ENCODE measurements at regions of chr11 and their contacts with region 1.

Region 1: DNA sequence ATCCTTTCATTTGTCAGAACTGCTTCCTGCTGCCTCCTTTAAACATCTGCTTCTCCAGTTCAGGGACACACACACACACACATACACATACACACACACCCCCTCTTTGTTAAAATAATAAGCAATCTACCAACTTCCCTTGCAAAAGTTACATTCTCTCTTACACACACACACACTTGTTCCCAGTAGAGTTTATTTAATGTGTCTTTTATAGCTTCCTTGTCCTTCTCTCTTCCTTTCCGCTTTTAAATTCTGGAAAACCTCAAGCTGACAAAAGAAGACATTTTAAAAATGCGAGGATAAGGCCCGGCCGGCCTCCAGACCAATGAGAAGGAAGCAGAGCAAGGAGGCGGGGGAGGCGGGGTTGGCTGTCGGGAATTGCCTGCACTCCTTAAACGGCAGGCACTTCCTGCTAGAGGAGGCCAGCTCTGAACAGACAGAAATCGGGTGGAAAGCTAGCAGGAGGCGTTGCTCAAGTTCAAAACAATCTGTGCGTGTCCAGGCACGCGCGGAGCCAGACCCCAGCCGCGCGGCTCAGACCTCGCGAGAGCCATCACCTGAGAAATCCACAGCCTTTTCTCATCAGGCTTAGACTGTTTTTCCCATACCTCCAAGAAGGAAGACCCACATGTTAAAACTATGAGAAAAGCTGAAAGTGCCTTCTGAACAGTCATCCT is 99.9 kb downstream of the MAML2 start:
- DNase-seq: peak; percentile 37
- ATAC-seq: peak; percentile 67
- H3K4me3 ChIP-seq: no peak overlapping the region; a peak in 1 of 6 replicates
- H3K27ac ChIP-seq: peak overlapping the region; percentile 71
- H3K4me1 ChIP-seq: peaks cover 77% of the 10 kb centered on the region
- H3K27me3 ChIP-seq: no peaks in the 10 kb centered on the region
- CTCF ChIP-seq: no peak
- EP300 ChIP-seq: no peak
- POLR2A ChIP-seq: no peak
- RAD21 ChIP-seq: no peak

Region 2: GRCh38 chr11:96091476-96091875 is 151.6 kb before region 1 on chr11:
- CTCF ChIA-PET with region 1: no interaction called
- POLR2A ChIA-PET with region 1: no interaction called
- in situ Hi-C with region 1: no loop called
- intact Hi-C with region 1: loop called (anchors 10 kb)
- DNase-seq: peak; percentile 18
- ATAC-seq: peak; percentile 53
- H3K4me3 ChIP-seq: no peak overlapping the region
- H3K27ac ChIP-seq: peak overlapping the region; percentile 47
- H3K4me1 ChIP-seq: peaks cover 43% of the 10 kb centered on the region
- H3K27me3 ChIP-seq: no peaks in the 10 kb centered on the region
- CTCF ChIP-seq: peak; percentile 14; the same call in 1 of the 2 replicates
- EP300 ChIP-seq: no peak
- POLR2A ChIP-seq: no peak
- RAD21 ChIP-seq: no peak

Region 3: GRCh38 chr11:96149743-96150555 is 93.2 kb before region 1 on chr11:
- CTCF ChIA-PET with region 1: no interaction called
- POLR2A ChIA-PET with region 1: no interaction called
- in situ Hi-C with region 1: no loop called
- intact Hi-C with region 1: loop called (anchors 1 kb)
- DNase-seq: peak; percentile 48
- ATAC-seq: no peak; the same call in 2 of the 3 replicates
- H3K4me3 ChIP-seq: no peak overlapping the region
- H3K27ac ChIP-seq: no peak overlapping the region
- H3K4me1 ChIP-seq: peaks cover 63% of the 10 kb centered on the region
- H3K27me3 ChIP-seq: no peaks in the 10 kb centered on the region
- CTCF ChIP-seq: no peak
- EP300 ChIP-seq: no peak
- POLR2A ChIP-seq: no peak
- RAD21 ChIP-seq: no peak

Region 4: GRCh38 chr11:96254087-96254486 is 11.0 kb after region 1 on chr11:
- CTCF ChIA-PET with region 1: no interaction called
- POLR2A ChIA-PET with region 1: no interaction called
- in situ Hi-C with region 1: no loop called
- intact Hi-C with region 1: no loop called
- DNase-seq: peak; percentile 52
- ATAC-seq: no peak
- H3K4me3 ChIP-seq: no peak overlapping the region
- H3K27ac ChIP-seq: no peak overlapping the region
- H3K4me1 ChIP-seq: peaks cover 31% of the 10 kb centered on the region
- H3K27me3 ChIP-seq: no peaks in the 10 kb centered on the region
- CTCF ChIP-seq: no peak
- EP300 ChIP-seq: peak in 1 of 2 experiments; percentile 23; a peak in 1 of 4 replicates
- POLR2A ChIP-seq: no peak
- RAD21 ChIP-seq: no peak